ENCODE measurements at regions of chr6 and their contacts with region 1.

Region 1: DNA sequence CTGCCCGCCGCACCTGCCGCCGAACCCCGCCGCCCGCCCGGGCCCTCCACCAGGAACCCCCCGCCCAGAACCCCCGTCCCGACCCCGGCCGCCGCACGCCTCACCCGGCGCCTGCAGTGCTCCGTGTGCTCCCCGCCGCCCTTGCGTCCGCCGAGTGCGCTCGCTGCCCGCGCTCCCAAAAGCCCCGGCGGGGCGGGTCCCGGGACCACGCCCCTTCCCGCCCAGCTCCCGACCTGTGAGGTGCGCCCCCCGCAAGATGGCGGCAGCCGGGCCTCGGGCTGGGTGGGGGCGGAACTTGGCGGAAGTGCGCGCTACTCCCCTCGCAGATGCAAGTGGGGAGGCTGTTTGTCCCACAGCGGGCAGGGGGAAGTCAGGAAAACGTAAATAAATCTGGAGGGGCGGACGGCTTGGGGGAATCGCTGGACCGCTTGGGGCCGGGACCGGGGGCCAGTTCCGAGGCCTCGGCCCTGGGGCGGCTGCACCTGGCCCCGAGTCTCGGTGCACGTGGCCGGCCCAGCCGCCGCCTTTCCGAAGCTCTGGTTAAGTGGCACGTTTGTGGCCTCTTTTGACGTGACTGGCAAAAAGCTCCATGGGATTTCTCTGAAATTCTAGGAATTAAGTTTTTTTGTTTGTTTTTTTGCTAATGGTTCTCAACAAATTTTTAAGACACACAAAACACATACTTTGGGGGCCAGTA is at the start of gene EZR:
- DNase-seq: peak; percentile 87
- H3K4me3 Mint-ChIP-seq: peak within 1 kb of the TSS; percentile 97
- H3K27ac Mint-ChIP-seq: peak within 1 kb of the TSS; percentile 98
- H3K4me1 Mint-ChIP-seq: peaks cover 47% of the 10 kb centered on the region
- H3K27me3 Mint-ChIP-seq: no peaks in the 10 kb centered on the region
- total RNA-seq, gene EZR: 229 to 230 TPM

Region 2: DNA sequence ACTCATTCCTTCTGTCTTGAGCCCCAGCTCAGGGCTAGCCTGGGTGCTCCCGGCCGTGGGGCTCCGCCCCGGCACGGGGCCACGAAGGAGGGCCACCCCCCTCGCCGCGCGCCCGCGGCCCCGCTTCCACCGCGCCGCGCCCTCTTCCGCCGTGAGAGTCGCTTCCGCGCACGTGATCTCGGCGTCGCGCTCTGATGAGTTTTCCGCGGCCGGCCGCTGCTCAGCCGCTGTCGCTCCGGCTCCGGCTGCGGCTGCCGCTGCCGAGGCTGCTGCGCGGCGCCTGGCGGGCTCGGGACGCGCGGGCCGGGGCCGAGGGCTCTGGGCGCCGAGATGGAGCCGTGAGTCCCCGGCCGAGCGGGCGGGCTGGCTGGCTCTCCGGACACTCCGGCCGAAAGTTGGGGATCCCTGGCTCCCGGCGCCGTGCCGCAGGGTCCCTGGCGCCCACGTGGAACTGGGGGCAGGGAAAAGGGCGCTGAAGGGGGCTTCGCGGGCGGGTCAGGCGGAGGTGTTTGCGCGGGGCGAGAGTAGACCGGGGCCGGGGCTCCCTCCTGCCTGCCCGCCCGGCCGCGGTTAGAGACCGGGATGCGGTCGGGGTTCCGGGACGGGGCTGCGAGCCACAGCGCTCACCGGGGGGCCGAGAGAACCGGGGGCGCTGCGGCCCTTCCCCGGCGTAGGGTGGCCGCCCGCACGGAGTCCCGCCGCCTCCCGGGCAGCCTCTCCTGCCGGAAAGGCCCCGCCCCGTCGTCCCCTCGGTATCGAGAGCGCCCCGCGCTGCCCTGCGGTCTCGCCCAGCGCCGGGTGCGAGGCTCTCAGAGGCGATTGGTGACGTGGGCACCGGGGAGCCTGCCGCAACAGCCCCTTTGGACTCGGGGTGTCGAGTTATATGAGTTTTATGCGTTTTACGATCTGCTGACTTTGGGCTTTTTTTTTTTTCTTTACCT is 259.2 kb before region 1 on chr6 and contains the start of gene TMEM181:
- CTCF ChIA-PET with region 1: no interaction called
- intact Hi-C with region 1: loop called (anchors 5 kb)
- DNase-seq: peak; percentile 90
- H3K4me3 Mint-ChIP-seq: peak within 1 kb of the TSS; percentile 93
- H3K27ac Mint-ChIP-seq: peak within 1 kb of the TSS; percentile 84
- H3K4me1 Mint-ChIP-seq: peaks cover 35% of the 10 kb centered on the region
- H3K27me3 Mint-ChIP-seq: no peaks in the 10 kb centered on the region
- total RNA-seq, gene TMEM181: 8.3 to 8.6 TPM

Region 3: DNA sequence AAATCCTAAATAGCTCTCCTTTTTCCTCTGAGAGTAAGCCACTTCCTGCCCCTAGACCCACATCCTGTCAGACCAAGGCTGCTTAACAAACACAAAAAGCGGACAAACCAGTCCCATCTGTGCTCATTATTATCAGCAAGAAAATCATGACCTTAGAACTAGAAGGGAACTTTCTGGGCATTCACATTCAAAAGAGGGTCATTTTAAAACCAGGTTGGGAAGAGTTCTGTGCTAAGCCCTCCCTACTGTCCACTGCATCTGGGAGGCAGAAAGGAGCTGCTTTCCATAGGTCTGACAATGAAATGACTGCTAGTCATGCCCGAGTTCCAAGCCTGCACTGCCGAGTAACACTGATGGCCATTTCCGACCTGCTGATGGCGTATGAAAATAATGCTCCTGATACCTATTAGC is 15.6 kb before region 1 on chr6:
- CTCF ChIA-PET with region 1: interaction called, 4 read pairs
- intact Hi-C with region 1: loop called (anchors 1 kb)
- DNase-seq: peak; percentile 52
- H3K4me3 Mint-ChIP-seq: peak overlapping the region; percentile 3
- H3K27ac Mint-ChIP-seq: peak overlapping the region; percentile 25
- H3K4me1 Mint-ChIP-seq: peaks cover 90% of the 10 kb centered on the region
- H3K27me3 Mint-ChIP-seq: no peaks in the 10 kb centered on the region

Region 4: GRCh38 chr6:158869826-158870648 is 50.7 kb after region 1 on chr6:
- CTCF ChIA-PET with region 1: interaction called, 4 read pairs
- intact Hi-C with region 1: loop called (anchors 1 kb)
- DNase-seq: peak; percentile 96
- H3K4me3 Mint-ChIP-seq: peak overlapping the region; percentile 88
- H3K27ac Mint-ChIP-seq: peak overlapping the region; percentile 99
- H3K4me1 Mint-ChIP-seq: peaks cover 35% of the 10 kb centered on the region
- H3K27me3 Mint-ChIP-seq: no peaks in the 10 kb centered on the region

Region 5: DNA sequence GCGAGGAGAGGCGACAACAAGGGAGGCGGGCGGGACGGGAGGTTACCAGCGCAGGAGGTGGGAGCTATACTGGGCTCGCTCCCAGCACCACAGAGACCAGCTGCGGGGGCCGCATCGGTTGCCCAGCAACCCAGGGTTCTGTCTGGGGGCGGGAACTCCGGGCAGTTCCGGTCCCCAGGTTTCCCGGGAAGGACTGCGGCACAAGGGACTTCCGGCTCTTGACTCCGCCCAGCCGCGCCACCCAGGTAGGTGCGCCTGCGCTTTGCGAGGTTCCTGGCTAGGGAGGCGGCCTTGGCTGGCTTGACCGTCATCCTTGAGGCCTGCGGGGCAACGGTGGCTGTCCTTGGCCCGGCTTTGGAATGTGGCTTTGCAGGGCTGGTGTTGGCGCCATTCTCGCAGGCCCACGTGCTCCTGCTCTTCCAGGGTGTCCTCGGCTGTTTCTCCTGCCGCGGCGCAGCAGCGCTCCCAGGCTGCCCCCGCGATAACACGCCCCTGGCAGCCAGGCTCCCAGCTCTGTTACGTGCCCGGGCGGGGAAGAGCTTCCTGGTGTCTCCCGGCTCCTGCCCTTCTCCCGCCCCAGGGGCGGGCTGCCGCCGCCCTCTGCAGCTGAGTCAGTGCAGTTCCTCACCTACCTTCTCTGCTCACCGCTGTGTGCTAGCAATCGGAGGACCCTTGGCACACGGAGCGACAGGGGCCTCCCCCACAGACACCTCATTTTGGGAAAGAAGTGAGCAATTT is 180.5 kb after region 1 on chr6 and contains the start of gene RSPH3:
- CTCF ChIA-PET with region 1: no interaction called
- intact Hi-C with region 1: loop called (anchors 1 kb)
- DNase-seq: peak; percentile 94
- H3K4me3 Mint-ChIP-seq: peak within 1 kb of the TSS; percentile 98
- H3K27ac Mint-ChIP-seq: peak within 1 kb of the TSS; percentile 82
- H3K4me1 Mint-ChIP-seq: peaks cover 45% of the 10 kb centered on the region
- H3K27me3 Mint-ChIP-seq: no peaks in the 10 kb centered on the region
- total RNA-seq, gene RSPH3: 3.0 to 3.2 TPM

Region 6: GRCh38 chr6:159761873-159762680 is 942.7 kb after region 1 on chr6 and contains the start of gene ACAT2:
- CTCF ChIA-PET with region 1: no interaction called
- intact Hi-C with region 1: loop called (anchors 5 kb)
- DNase-seq: peak; percentile 97
- H3K4me3 Mint-ChIP-seq: peak within 1 kb of the TSS; percentile 96
- H3K27ac Mint-ChIP-seq: peak within 1 kb of the TSS; percentile 96
- H3K4me1 Mint-ChIP-seq: peaks cover 42% of the 10 kb centered on the region
- H3K27me3 Mint-ChIP-seq: no peaks in the 10 kb centered on the region
- total RNA-seq, gene ACAT2: 84.9 to 92.4 TPM